Calu3 (cell line): ENCODE measurements at regions of chr13 and their contacts with region 1.

Region 1: GRCh38 chr13:27379694-27380641 is 44.5 kb upstream of the GTF3A start:
- DNase-seq: peak; percentile 78
- H3K4me3 Mint-ChIP-seq: no peak overlapping the region
- H3K27ac Mint-ChIP-seq: no peak overlapping the region
- H3K4me1 Mint-ChIP-seq: no peaks in the 10 kb centered on the region
- H3K27me3 Mint-ChIP-seq: peaks cover 11% of the 10 kb centered on the region
- CTCF ChIP-seq: peak; percentile 23

Region 2: DNA sequence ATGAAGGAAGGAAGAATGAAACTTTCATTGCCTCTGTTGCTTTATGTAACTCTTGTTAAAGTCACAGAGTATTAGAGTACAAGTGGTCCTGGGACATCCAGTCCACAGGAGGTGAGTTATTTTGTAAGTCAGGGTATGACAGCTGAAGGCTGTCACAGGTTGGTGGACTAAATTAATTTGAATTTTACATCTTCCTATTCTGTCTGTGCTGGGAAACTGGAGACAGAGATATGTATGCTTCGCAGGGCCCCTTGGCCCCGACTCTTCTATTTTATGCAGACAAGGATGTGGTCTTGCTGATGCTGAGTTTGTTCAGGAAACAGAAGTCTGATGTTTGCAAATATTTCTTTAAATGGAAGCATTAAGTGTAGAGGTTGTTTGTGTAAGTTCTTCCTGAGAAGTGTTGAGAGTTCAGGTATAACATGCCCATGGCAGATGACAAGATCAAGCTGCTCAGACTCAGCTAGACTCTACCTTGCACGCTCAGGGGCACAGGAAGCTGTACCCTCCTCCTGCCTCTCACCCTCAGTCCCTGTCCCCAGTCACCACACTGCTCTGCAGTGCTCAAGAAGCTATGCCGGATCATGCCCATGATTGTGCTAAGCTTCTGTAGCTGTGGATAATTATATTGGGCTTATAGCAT is 86.0 kb before region 1 on chr13:
- CTCF ChIA-PET with region 1: no interaction called
- intact Hi-C with region 1: no loop called
- DNase-seq: no peak
- H3K4me3 Mint-ChIP-seq: no peak overlapping the region
- H3K27ac Mint-ChIP-seq: no peak overlapping the region
- H3K4me1 Mint-ChIP-seq: no peaks in the 10 kb centered on the region
- H3K27me3 Mint-ChIP-seq: peaks cover 64% of the 10 kb centered on the region
- CTCF ChIP-seq: no peak

Region 3: GRCh38 chr13:27425917-27426630 is 46.1 kb after region 1 on chr13:
- CTCF ChIA-PET with region 1: no interaction called
- intact Hi-C with region 1: loop called (anchors 2 kb)
- DNase-seq: peak; percentile 70
- H3K4me3 Mint-ChIP-seq: peak overlapping the region; percentile 82
- H3K27ac Mint-ChIP-seq: peak overlapping the region; percentile 84
- H3K4me1 Mint-ChIP-seq: peaks cover 31% of the 10 kb centered on the region
- H3K27me3 Mint-ChIP-seq: no peaks in the 10 kb centered on the region
- CTCF ChIP-seq: peak; percentile 20